ENCODE measurements at regions of chr1 and their contacts with region 1.

Region 1: DNA sequence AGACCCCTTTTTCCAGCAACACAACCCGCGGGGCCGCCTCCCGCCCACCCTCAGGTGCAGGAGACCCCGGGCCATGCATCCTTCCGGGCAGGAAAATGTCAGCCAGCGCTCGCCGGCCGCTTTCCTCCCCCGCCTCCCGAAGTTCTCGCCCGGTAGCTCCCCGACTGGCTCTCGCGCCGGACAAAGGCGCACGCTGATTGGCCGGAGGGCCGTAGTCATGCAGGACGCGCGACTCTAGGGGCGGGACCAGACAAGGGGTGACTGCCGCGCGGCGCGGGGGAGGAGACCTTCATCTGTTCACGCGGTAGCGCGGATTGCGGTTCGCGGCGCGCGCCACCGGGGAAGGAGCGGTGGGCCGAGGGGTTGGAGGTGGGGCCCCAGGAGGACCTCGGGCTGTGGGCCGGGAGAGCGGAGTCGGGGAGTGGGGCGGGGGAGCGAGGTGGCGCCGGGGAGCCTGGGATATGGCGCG is at the start of gene FLVCR1:
- DNase-seq: peak; percentile 95
- H3K4me3 Mint-ChIP-seq: no peak within 1 kb of the TSS
- H3K27ac Mint-ChIP-seq: peak within 1 kb of the TSS; percentile 97
- H3K4me1 Mint-ChIP-seq: peaks cover 20% of the 10 kb centered on the region
- H3K27me3 Mint-ChIP-seq: no peaks in the 10 kb centered on the region
- total RNA-seq, gene FLVCR1: 23.0 and 24.3 TPM in 2 replicates

Region 2: DNA sequence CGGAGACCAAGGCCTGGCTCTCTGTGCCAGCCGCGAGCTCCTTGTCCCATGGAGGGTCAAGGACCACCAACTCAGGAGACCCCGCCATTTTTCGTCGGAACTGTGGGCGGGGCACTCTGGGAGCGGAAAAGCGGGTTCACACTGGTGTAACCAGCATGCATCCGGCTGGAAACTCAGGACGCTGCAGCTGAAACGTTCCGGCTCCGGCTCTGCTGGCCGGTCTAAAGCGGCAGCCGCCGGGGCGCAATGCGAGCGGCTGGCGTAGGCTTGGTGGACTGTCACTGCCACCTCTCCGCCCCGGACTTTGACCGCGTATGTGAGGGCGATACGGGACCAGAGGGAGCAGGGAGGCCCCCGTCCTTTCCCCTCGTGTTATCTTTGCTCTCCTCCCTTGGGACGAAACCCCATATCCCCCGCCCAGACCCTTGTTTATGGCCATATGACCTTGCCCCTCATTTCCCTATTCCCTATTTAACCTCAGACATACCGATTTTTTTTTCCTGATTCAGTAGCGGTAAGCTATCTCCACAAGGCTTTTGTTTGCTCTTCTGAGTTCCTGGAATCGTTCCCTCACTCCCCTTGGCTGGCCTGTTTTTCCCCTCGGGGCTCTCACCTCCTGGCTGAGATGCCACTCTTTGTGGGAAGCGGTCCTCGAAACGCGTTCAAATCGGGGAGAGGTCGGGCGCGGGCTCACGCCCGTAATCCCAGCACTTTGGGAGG is 66.2 kb before region 1 on chr1 and contains the starts of genes NSL1 and TATDN3:
- intact Hi-C with region 1: loop called (anchors 5 kb)
- DNase-seq: peak; percentile 94
- H3K4me3 Mint-ChIP-seq: peak within 1 kb of the TSS; percentile 100
- H3K27ac Mint-ChIP-seq: peak within 1 kb of the TSS; percentile 98
- H3K4me1 Mint-ChIP-seq: peaks cover 25% of the 10 kb centered on the region
- H3K27me3 Mint-ChIP-seq: no peaks in the 10 kb centered on the region
- total RNA-seq, gene NSL1: 45.4 and 52.6 TPM in 2 replicates
- total RNA-seq, gene TATDN3: 16.7 and 18.7 TPM in 2 replicates

Region 3: DNA sequence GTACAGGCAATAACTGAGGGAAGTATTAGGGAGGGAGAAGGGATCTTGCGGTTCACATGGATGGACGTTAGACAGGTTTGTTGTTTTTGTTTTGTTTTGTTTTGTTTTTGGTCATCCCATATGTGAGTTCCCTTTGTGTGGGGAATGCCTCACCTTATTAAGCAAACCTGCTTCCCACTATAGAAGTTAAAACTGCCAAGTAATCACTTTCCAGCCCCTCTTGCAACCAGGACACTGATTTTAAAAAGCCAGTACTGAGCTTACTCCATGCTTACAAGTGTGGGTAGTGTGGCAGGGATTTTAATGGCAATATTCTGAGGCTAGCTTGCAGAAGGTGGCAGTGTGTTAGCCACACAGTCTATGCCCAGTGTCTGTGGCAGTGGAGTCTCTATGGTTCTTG is 37.1 kb before region 1 on chr1:
- intact Hi-C with region 1: loop called (anchors 1 kb)
- DNase-seq: no peak
- H3K4me3 Mint-ChIP-seq: no peak overlapping the region
- H3K27ac Mint-ChIP-seq: no peak overlapping the region
- H3K4me1 Mint-ChIP-seq: peaks cover 3% of the 10 kb centered on the region
- H3K27me3 Mint-ChIP-seq: no peaks in the 10 kb centered on the region

Measured in activated T-helper 2 cell treated with anti-CD3 and anti-CD28 coated beads, Interferon-gamma antibody, Interleukin-2, Interleukin-4, amounts not matched to agents 10 μg/mL and 5 μg/mL and 100 μg/mL, durations not matched to agents 14 hours and 24 hours and 36 hours (primary cell).